Left cardiac atrium (tissue), 4 donors: ENCODE measurements at regions of chr2 and their contacts with region 1.

Region 1: DNA sequence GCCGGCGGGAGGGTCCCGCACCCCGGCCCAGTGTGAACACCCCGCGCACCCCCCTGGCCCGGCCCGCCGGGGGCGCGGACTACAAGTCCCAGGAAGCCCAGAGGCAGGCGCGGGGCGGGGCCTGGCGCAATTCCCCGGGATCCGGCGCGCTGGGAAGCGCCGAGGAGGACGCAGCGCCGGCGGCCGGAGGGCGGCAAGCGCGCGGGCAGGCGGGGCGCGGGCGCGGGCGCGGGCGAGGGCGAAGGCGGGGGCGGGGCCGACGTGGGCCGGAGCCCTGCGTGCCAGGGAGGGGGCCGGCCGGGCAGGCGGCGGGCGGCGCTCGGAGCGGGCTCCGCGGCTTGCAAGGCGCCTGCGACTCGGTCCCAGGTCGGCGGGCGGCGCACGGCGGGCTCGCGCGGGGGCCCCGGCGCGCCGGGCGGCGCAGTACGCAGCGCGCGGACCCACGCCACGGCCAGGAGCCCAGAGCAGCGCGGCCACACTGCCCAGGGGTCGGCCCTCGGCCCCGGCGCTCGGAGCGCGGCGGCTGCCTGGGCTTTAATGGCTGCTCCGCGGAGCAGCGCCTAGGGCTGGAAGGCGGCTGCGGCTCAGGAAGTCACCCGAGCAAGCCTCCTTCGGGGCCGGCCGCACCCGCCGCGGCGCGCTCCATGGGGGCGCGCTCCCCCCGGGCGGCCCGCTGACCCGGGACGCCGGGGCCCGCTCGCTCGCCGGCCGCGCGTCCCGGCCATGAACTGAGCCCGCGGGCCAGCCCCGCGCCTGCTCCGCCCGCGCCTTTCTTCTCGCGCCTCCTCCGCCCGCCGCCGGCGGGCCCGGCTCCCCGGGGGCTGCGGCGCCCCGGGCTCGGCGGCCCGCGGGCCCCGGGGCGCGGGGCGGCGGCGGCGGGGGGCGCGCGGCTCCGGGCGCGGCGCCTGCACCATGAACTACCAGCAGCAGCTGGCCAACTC is at the start of gene AGAP1:
- DNase-seq: peak; percentile 92
- ATAC-seq: peak; percentile 92 to 94
- total RNA-seq, gene AGAP1: 22.5 to 23.9 TPM

Region 2: GRCh38 chr2:235135990-235136561 is 358.0 kb before region 1 on chr2:
- intact Hi-C with region 1: loop called in 1 of 2 experiments (anchors 2 kb)
- DNase-seq: peak; percentile 90
- ATAC-seq: peak; percentile 94 to 96

Region 3: DNA sequence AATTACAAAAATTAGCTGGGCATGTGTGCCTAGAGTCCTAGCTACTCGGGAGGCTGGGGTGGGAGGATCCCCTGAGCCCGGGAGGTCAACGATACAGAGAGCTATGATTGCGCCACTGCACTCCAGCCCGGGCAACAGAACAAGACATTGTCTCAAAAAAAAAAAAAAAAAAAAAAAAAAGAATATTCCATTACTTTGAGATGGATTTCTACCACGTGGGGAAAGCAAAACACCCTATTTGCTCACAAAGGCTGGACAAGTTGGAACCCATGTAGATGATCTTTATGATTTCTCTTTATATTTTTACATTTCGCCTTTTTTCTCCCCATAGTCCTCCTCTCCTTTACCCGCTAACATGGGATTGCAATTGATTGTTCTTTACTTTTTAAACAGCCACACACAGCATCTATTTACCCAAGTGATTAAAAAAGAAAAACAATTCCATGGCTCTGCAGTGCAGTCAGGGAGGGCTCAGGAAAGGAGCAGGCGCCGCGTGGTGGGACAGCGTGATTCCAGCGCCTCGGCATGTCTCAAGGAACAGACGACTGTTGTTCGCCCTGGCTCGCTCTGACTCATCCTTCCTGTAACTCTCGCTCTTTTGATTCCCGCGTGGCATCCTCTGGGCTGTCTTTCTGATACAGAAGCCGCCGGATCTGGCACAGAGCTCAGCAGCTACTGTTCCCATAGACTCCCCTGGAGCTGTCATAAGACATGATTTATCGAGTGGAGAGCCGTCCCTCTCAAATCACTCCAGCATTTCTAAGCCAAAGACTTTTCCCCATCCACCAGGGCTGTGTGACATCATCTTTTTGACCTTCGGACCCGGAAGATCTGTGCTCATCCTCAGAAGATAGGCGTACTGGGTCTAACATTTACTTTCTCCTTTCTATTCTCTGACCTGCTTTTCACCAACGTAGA is 230.6 kb before region 1 on chr2:
- intact Hi-C with region 1: no loop called
- DNase-seq: peak; percentile 92
- ATAC-seq: peak; percentile 83 to 96

Region 4: GRCh38 chr2:235588750-235589149 is 94.7 kb after region 1 on chr2:
- intact Hi-C with region 1: loop called in 1 of 2 experiments (anchors 10 kb)
- DNase-seq: no peak
- ATAC-seq: peak in 1 of 2 donors; percentile 26